Naive thymus-derived CD4-positive, alpha-beta T cell (primary cell): ENCODE measurements at regions of chr1 and their contacts with region 1.

Region 1: GRCh38 chr1:46394108-46394871 is at the start of gene FAAH:
- DNase-seq: peak; percentile 27 to 63 (median 49)
- ATAC-seq: peak; percentile 83
- H3K4me3 ChIP-seq: peak within 1 kb of the TSS; percentile 43
- H3K4me3 Mint-ChIP-seq: peak within 1 kb of the TSS; percentile 70 to 93 (median 84)
- H3K27ac ChIP-seq: no peak within 1 kb of the TSS
- H3K27ac Mint-ChIP-seq: peak within 1 kb of the TSS in 4 of 9 donors; percentile 57 to 86 (median 64)
- H3K4me1 ChIP-seq: no peaks in the 10 kb centered on the region
- H3K4me1 Mint-ChIP-seq: peaks cover 0 to 23% (median 11%) of the 10 kb centered on the region in 7 donors
- H3K27me3 ChIP-seq: no peaks in the 10 kb centered on the region
- H3K27me3 Mint-ChIP-seq: peaks cover 25 to 46% (median 32%) of the 10 kb centered on the region in 5 donors
- total RNA-seq, gene FAAH: 3.8 to 17.1 (median 8.5) TPM

Region 2: GRCh38 chr1:46166521-46167462 is 227.5 kb before region 1 on chr1:
- CTCF ChIA-PET with region 1: no interaction called
- POLR2A ChIA-PET with region 1: interaction called, 11 read pairs
- intact Hi-C with region 1: no loop called
- DNase-seq: peak; percentile 15 to 73 (median 65)
- ATAC-seq: peak; percentile 66
- H3K4me3 ChIP-seq: peak overlapping the region; percentile 83
- H3K4me3 Mint-ChIP-seq: peak overlapping the region; percentile 85 to 95 (median 91)
- H3K27ac ChIP-seq: peak overlapping the region; percentile 74
- H3K27ac Mint-ChIP-seq: peak overlapping the region; percentile 86 to 99 (median 96)
- H3K4me1 ChIP-seq: peaks cover 3 to 9% of the 10 kb centered on the region in 2 donors
- H3K4me1 Mint-ChIP-seq: peaks cover 10 to 26% (median 17%) of the 10 kb centered on the region in 7 donors
- H3K27me3 ChIP-seq: no peaks in the 10 kb centered on the region
- H3K27me3 Mint-ChIP-seq: peaks cover 0 to 30% (median 4%) of the 10 kb centered on the region in 5 donors

Region 3: GRCh38 chr1:46431691-46432090 is 37.4 kb after region 1 on chr1:
- CTCF ChIA-PET with region 1: no interaction called
- POLR2A ChIA-PET with region 1: no interaction called
- intact Hi-C with region 1: no loop called
- DNase-seq: no peak
- ATAC-seq: no peak
- H3K4me3 ChIP-seq: no peak overlapping the region
- H3K4me3 Mint-ChIP-seq: no peak overlapping the region
- H3K27ac ChIP-seq: no peak overlapping the region
- H3K27ac Mint-ChIP-seq: no peak overlapping the region
- H3K4me1 ChIP-seq: no peaks in the 10 kb centered on the region
- H3K4me1 Mint-ChIP-seq: no peaks in the 10 kb centered on the region
- H3K27me3 ChIP-seq: no peaks in the 10 kb centered on the region
- H3K27me3 Mint-ChIP-seq: peaks cover 0 to 18% (median 7%) of the 10 kb centered on the region in 5 donors